ENCODE measurements at regions of chr6 and their contacts with region 1.

Region 1: GRCh38 chr6:161943561-161943960 is 669.7 kb upstream of the AGPAT4 start:
- DNase-seq: no peak
- ATAC-seq: no peak
- H3K4me3 ChIP-seq: no peak overlapping the region
- H3K4me3 Mint-ChIP-seq: no peak overlapping the region
- H3K27ac ChIP-seq: no peak overlapping the region
- H3K27ac Mint-ChIP-seq: no peak overlapping the region
- H3K4me1 ChIP-seq: no peaks in the 10 kb centered on the region
- H3K4me1 Mint-ChIP-seq: no peaks in the 10 kb centered on the region
- H3K27me3 ChIP-seq: no peaks in the 10 kb centered on the region
- H3K27me3 Mint-ChIP-seq: no peaks in the 10 kb centered on the region
- CTCF ChIP-seq: no peak

Region 2: GRCh38 chr6:161924516-161925116 is 18.9 kb before region 1 on chr6:
- CTCF ChIA-PET with region 1: no interaction called
- POLR2A ChIA-PET with region 1: no interaction called
- intact Hi-C with region 1: no loop called
- DNase-seq: no peak
- ATAC-seq: no peak
- H3K4me3 ChIP-seq: no peak overlapping the region
- H3K4me3 Mint-ChIP-seq: no peak overlapping the region
- H3K27ac ChIP-seq: no peak overlapping the region
- H3K27ac Mint-ChIP-seq: no peak overlapping the region
- H3K4me1 ChIP-seq: no peaks in the 10 kb centered on the region
- H3K4me1 Mint-ChIP-seq: no peaks in the 10 kb centered on the region
- H3K27me3 ChIP-seq: no peaks in the 10 kb centered on the region
- H3K27me3 Mint-ChIP-seq: no peaks in the 10 kb centered on the region
- CTCF ChIP-seq: no peak

Region 3: DNA sequence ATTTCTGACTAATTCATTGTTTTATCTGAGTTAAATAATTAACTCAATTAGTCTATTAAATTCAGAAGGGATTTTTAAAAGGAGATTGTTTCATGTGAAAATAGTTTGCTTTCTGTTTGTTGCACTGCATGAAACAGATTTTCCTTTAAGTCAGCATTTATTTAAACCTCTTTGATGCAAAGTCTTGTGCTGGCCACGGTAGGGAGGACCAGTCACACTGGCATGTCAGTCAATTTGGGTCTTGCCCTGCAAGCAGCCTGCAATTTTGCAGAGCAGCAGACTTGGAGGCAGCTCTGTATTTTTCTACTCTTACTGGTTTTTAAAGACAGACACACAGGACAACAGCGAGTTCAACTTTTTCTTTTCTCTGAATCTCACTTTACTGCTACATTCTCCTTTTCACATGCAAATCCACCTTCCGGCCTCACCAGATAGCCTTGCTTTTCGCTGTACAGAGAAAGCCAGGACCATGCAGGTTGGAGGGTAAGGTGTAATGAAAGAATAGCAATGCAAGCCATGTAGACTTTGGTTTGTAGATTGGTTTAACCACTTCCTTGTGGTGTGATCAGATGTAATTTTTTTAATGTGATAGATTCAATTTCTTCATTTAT is 20.2 kb after region 1 on chr6:
- CTCF ChIA-PET with region 1: no interaction called
- POLR2A ChIA-PET with region 1: no interaction called
- intact Hi-C with region 1: loop called in 1 of 2 experiments (anchors 2 kb)
- DNase-seq: no peak
- ATAC-seq: no peak
- H3K4me3 ChIP-seq: no peak overlapping the region
- H3K4me3 Mint-ChIP-seq: no peak overlapping the region
- H3K27ac ChIP-seq: no peak overlapping the region
- H3K27ac Mint-ChIP-seq: no peak overlapping the region
- H3K4me1 ChIP-seq: no peaks in the 10 kb centered on the region
- H3K4me1 Mint-ChIP-seq: no peaks in the 10 kb centered on the region
- H3K27me3 ChIP-seq: no peaks in the 10 kb centered on the region
- H3K27me3 Mint-ChIP-seq: no peaks in the 10 kb centered on the region
- CTCF ChIP-seq: no peak

Measured in CD4-positive, alpha-beta T cell (primary cell).